Activated T-helper 1 cell treated with anti-CD3 and anti-CD28 coated beads, Interleukin-12 subunit alpha, Interleukin-12 subunit beta, Interleukin-2, Interleukin-4 antibody, amounts not matched to agents 30 ng/mL and 10 ng/mL and 1 ng/mL, durations not matched to agents 14 hours and 24 hours and 36 hours (primary cell): ENCODE measurements at regions of chr6 and their contacts with region 1.

Region 1: DNA sequence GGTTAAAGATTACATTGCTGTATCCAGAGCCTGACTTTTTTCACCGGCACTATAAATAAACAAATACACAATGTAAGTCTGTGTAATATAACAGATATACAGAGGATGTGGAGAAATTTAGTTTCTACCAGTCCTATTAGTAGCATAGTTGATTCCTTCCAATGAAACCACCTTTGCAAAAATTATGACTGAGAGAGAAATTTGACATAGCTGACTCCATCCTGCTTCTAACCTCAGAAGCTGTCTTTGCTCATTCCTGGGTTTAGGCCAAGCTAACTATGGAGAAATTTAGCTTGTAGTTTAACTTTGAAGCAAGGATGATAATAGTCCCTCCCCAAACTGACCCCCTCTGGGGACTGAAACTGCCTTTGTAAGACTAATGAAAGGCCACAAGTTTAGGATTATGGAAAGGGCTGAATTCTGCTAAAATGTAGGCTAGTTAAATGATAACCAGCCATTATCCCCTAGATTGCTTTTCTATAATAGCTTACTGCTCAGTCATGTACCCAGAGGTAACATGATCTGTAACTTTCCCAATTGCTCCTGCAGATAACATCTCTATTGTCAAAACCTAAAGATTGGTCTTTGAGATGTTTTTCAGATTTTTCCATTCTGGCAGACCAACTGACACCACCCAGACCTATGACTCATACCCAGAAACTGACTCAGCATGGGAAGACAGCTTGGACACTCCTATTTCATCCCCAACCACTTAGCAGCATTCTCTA is 172.8 kb upstream of the ARG1 start:
- DNase-seq: no peak
- H3K4me3 Mint-ChIP-seq: no peak overlapping the region
- H3K27ac Mint-ChIP-seq: peak overlapping the region; percentile 47
- H3K4me1 Mint-ChIP-seq: peaks cover 15% of the 10 kb centered on the region
- H3K27me3 Mint-ChIP-seq: no peaks in the 10 kb centered on the region

Region 2: GRCh38 chr6:131451321-131452144 is 51.3 kb after region 1 on chr6:
- intact Hi-C with region 1: loop called (anchors 5 kb)
- DNase-seq: no peak
- H3K4me3 Mint-ChIP-seq: peak overlapping the region; percentile 28
- H3K27ac Mint-ChIP-seq: peak overlapping the region; percentile 87
- H3K4me1 Mint-ChIP-seq: peaks cover 46% of the 10 kb centered on the region
- H3K27me3 Mint-ChIP-seq: no peaks in the 10 kb centered on the region

Region 3: GRCh38 chr6:131519670-131520436 is 119.6 kb after region 1 on chr6:
- intact Hi-C with region 1: no loop called
- DNase-seq: peak; percentile 27
- H3K4me3 Mint-ChIP-seq: no peak overlapping the region
- H3K27ac Mint-ChIP-seq: no peak overlapping the region
- H3K4me1 Mint-ChIP-seq: peaks cover 14% of the 10 kb centered on the region
- H3K27me3 Mint-ChIP-seq: peaks cover 10% of the 10 kb centered on the region